PC-3 (cell line): ENCODE measurements at regions of chr19 and their contacts with region 1.

Region 1: GRCh38 chr19:15028490-15028889 is 20.8 kb upstream of the CASP14 start:
- DNase-seq: no peak
- ATAC-seq: no peak
- H3K4me3 ChIP-seq: no peak overlapping the region
- H3K27ac ChIP-seq: no peak overlapping the region
- H3K4me1 ChIP-seq: no peaks in the 10 kb centered on the region
- H3K27me3 ChIP-seq: no peaks in the 10 kb centered on the region
- CTCF ChIP-seq: no peak

Region 2: GRCh38 chr19:14916848-14917247 is 111.6 kb before region 1 on chr19:
- CTCF ChIA-PET with region 1: interaction called, 4 read pairs
- POLR2A ChIA-PET with region 1: no interaction called
- intact Hi-C with region 1: loop called (anchors 5 kb)
- DNase-seq: peak; percentile 64
- ATAC-seq: peak; percentile 77
- H3K4me3 ChIP-seq: no peak overlapping the region
- H3K27ac ChIP-seq: no peak overlapping the region
- H3K4me1 ChIP-seq: no peaks in the 10 kb centered on the region
- H3K27me3 ChIP-seq: peaks cover 15% of the 10 kb centered on the region
- CTCF ChIP-seq: peak; percentile 57

Region 3: GRCh38 chr19:14954071-14954659 is 74.3 kb before region 1 on chr19:
- CTCF ChIA-PET with region 1: no interaction called
- POLR2A ChIA-PET with region 1: no interaction called
- intact Hi-C with region 1: no loop called
- DNase-seq: no peak
- ATAC-seq: no peak
- H3K4me3 ChIP-seq: no peak overlapping the region
- H3K27ac ChIP-seq: no peak overlapping the region
- H3K4me1 ChIP-seq: no peaks in the 10 kb centered on the region
- H3K27me3 ChIP-seq: no peaks in the 10 kb centered on the region
- CTCF ChIP-seq: no peak

Region 4: GRCh38 chr19:15195371-15196334 is 167.2 kb after region 1 on chr19:
- CTCF ChIA-PET with region 1: no interaction called
- POLR2A ChIA-PET with region 1: no interaction called
- intact Hi-C with region 1: no loop called
- DNase-seq: peak; percentile 96
- ATAC-seq: peak; percentile 53
- H3K4me3 ChIP-seq: peak overlapping the region; percentile 57
- H3K27ac ChIP-seq: peak overlapping the region; percentile 89
- H3K4me1 ChIP-seq: peaks cover 25% of the 10 kb centered on the region
- H3K27me3 ChIP-seq: no peaks in the 10 kb centered on the region
- CTCF ChIP-seq: 0 out of 2 replicates have a peak, but pooled peaks have one; percentile 14